ENCODE measurements at regions of chr1 and their contacts with region 1.

Region 1: DNA sequence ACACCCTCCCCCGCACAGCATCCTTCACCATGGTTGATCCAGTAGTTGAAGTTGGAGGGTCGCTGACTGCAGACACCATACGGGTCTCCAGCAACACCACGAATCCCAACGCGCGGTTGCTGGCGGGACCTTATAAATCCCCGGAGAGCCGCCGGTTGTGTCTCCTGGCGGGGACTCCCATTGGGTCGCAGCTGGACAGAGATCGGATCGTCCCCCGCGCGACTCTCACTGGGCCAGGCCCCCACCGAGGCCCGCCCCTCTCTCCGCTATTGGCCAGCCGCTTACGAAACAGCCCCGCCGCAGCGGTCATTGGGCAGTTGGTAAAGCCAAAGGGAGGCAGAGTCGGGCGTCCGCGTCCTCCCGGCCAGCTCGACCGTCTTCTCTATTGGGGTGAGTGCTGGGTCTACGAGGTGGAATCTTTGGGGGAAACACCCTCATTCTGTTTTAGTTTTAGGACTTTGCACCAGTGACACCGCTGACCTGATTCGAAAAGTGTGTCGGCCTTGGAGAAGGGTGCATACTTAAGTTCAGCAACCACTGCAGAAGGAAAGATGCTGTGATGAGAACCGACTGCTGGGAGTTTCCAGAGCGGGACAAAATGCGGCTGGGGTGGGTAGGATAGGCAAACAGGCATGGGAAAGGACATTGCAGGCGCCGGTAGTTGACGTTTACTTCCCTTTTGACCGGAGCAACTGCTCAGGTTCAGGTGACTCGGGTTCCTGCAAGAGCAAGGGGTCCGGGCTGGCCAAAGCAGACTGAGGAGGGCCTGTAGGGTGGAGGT is 27.3 kb downstream of the RABIF start:
- DNase-seq: peak; percentile 75
- ATAC-seq: peak; percentile 96
- H3K4me3 ChIP-seq: peak overlapping the region; percentile 76 to 77
- H3K27ac ChIP-seq: no peak overlapping the region; the same call in 1 of the 2 replicates
- H3K4me1 ChIP-seq: peaks cover 8 to 14% of the 10 kb centered on the region in 2 experiments; a peak in 3 of 4 replicates
- H3K27me3 ChIP-seq: 0 out of 2 replicates have a peak, but pooled peaks cover 2% of the 10 kb centered on the region
- CTCF ChIP-seq: no peak
- POLR2A ChIP-seq: peak; percentile 56
- RAD21 ChIP-seq: no peak

Region 2: DNA sequence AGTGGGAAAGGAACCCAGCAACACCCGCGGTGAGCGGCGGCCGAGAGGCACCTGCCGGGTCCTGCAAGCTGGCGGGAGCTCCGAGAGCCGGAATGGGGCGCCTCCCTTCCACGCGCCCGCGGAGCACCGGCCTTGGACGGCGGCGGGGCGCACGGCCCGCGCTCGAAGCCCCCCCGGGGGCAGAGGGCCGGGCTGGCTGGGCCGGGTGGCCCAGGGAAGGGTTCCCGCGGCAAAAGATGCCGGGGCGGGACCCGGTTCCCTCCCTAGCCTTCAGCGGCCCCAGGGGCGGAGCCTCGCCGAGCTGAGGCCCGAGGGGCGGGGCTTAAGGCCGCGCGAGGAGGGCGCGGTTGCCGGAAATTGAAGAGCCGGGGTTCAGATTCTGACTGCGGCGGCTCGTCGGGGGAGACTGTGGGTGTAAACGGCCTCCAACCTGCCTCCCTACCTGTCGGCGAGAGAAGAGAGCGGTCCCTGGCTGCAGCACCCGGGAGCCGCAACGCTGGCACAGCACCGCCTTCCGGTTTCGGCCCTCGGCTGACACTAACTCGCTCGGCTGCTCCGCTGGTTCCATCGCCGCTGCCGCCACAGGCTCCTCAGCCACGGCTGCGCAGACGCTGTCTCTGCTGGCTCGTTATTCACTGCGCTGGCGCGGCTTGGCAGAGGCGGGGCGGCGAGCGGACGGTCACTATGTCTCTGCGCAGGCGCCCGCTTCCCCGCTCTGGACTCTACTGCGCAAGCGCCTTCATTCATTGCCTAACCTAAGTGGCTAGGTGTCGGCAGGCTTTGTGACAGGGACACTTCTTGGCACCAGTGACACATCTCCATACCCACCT is 27.1 kb after region 1 on chr1 and contains the start of gene RABIF:
- CTCF ChIA-PET with region 1: no interaction called
- POLR2A ChIA-PET with region 1: no interaction called
- RAD21 ChIA-PET with region 1: no interaction called
- intact Hi-C with region 1: loop called (anchors 2 kb)
- DNase-seq: peak; percentile 88
- ATAC-seq: peak; percentile 96
- H3K4me3 ChIP-seq: peak within 1 kb of the TSS; percentile 67 to 84
- H3K27ac ChIP-seq: peak within 1 kb of the TSS; percentile 90
- H3K4me1 ChIP-seq: peaks cover 6 to 14% of the 10 kb centered on the region in 2 experiments; a peak in 3 of 4 replicates
- H3K27me3 ChIP-seq: no peaks in the 10 kb centered on the region
- CTCF ChIP-seq: peak in 1 of 3 experiments; percentile 13; a peak in 1 of 6 replicates
- POLR2A ChIP-seq: peak; percentile 89
- RAD21 ChIP-seq: no peak
- total RNA-seq, gene RABIF: 5.4 TPM

Region 3: DNA sequence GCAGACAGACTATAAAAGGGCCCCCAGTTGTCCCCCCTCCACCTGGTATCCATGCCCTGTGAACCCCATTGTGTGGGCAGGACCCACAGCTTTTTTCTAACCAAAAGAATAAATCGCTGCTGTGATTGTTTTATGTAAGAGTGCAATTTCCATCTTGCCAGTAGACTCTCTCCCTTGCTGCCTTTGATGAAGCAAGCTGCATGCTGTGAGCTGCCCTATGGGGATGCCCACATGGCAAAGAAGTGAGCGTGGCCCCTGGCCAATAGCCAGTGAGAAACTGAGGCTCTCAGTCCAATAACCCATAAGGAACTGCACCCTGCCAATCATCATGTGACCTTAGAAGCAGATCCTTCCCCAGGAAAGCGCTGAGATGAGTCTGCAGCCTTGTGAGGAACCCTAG is 527.1 kb after region 1 on chr1:
- CTCF ChIA-PET with region 1: no interaction called
- POLR2A ChIA-PET with region 1: no interaction called
- RAD21 ChIA-PET with region 1: no interaction called
- intact Hi-C with region 1: loop called (anchors 5 kb)
- DNase-seq: no peak
- ATAC-seq: no peak
- H3K4me3 ChIP-seq: no peak overlapping the region
- H3K27ac ChIP-seq: no peak overlapping the region
- H3K4me1 ChIP-seq: no peaks in the 10 kb centered on the region
- H3K27me3 ChIP-seq: peaks cover 15% of the 10 kb centered on the region
- CTCF ChIP-seq: no peak
- POLR2A ChIP-seq: no peak
- RAD21 ChIP-seq: no peak